CD14-positive monocyte (primary cell): ENCODE measurements at regions of chr14 and their contacts with region 1.

Region 1: DNA sequence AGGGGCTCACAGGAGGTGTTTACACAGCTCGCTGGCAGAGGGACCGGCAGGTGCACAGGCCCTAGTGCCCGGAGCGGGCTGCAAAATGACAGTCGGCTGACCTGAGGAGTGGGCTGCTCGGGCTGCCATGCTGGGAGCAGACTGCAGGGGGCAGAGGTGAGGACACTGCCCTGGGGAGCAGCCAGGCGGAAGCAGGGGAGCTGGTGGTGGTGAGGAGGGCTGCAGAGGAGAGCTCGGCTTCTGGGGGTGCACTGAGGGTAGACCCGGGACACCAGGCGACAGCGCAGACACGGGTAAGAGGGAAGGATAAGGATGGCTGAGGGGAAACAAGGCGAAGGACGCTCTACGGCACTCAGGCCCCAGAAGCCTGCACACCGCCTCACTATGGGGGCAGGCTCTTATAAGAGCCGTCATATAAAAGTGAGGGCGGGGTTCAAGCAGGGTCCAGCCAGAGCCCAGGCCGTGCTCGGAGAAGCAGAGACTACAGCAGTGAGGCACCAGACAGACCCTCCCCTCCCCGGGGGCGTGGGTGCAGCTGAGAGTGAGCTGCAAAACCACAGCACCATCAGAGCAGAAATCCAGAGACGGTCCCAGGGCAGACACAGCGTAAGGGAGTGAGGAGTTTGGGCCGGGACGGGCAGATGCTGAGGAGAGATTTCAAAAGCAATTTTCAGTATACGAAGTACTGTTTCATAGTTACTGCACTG is 62.5 kb downstream of the CCDC88C start:
- DNase-seq: peak in 1 of 3 donors; percentile 9
- H3K4me3 ChIP-seq: no peak overlapping the region
- H3K4me3 Mint-ChIP-seq: no peak overlapping the region
- H3K27ac ChIP-seq: peak overlapping the region in 1 of 2 donors; percentile 12
- H3K27ac Mint-ChIP-seq: peak overlapping the region in 5 of 7 donors; percentile 3 to 84 (median 57)
- H3K4me1 ChIP-seq: peaks cover 47 to 62% of the 10 kb centered on the region in 2 donors
- H3K4me1 Mint-ChIP-seq: peaks cover 77% of the 10 kb centered on the region
- H3K27me3 ChIP-seq: no peaks in the 10 kb centered on the region
- H3K27me3 Mint-ChIP-seq: no peaks in the 10 kb centered on the region
- CTCF ChIP-seq: peak; percentile 60

Region 2: DNA sequence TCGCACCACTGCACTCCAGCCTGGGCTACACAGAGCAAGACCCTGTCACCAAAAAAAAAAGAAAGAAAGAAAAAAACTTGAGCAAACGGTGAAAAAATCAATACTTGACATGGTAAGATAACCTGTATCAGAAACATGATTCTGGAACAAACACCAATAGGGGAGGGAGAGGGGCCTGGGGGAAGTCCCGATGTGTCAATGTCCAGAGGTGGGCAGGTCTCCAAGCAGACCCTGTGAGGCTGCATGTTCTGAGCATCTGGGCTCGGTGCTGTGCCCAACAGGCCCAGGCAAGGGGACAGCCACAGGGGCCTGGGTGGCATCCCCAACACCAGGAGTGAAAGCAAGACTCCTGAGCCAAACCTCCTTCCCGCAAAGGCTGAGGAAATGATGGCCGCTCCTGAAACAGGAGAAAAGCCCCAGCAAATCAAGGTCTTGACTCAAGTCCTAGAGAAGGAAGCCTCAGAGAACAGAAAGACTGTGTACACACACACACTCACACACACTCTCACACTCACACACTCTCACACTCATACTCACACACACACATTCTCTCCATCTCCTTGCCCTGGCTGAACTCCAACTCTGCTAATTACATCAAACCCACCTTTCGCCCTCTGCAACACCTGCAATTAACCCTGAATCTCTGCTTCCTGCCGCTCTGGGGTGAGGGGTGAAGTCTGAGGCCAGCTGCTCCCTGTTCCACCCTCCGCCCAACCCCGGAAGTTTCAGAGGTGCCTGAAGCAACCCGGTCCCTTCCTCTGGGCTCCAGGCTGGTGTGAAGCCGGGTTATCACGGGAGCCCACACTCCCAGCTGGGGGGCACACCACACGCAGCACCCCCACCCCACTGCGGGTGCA is 42.1 kb after region 1 on chr14:
- intact Hi-C with region 1: loop called (anchors 5 kb)
- DNase-seq: peak in 2 of 3 donors; percentile 44 to 49
- H3K4me3 ChIP-seq: peak overlapping the region; percentile 16 to 67 (median 24)
- H3K4me3 Mint-ChIP-seq: peak overlapping the region; percentile 75 to 92
- H3K27ac ChIP-seq: peak overlapping the region; percentile 83 to 84
- H3K27ac Mint-ChIP-seq: peak overlapping the region; percentile 88 to 96 (median 95)
- H3K4me1 ChIP-seq: peaks cover 93 to 94% of the 10 kb centered on the region in 2 donors
- H3K4me1 Mint-ChIP-seq: peaks cover 95% of the 10 kb centered on the region
- H3K27me3 ChIP-seq: no peaks in the 10 kb centered on the region
- H3K27me3 Mint-ChIP-seq: peaks cover 0 to 2% (median 1%) of the 10 kb centered on the region in 3 donors
- CTCF ChIP-seq: no peak